ENCODE measurements at regions of chr7 and their contacts with region 1.

Region 1: GRCh38 chr7:85851571-85852193 is 664.8 kb upstream of the SEMA3D start:
- DNase-seq: peak; percentile 16
- ATAC-seq: no peak
- H3K4me3 ChIP-seq: no peak overlapping the region
- H3K27ac ChIP-seq: no peak overlapping the region
- H3K4me1 ChIP-seq: no peaks in the 10 kb centered on the region
- H3K27me3 ChIP-seq: no peaks in the 10 kb centered on the region
- CTCF ChIP-seq: peak; percentile 41
- EP300 ChIP-seq: no peak
- POLR2A ChIP-seq: no peak
- RAD21 ChIP-seq: no peak

Region 2: GRCh38 chr7:85634946-85635345 is 216.7 kb before region 1 on chr7:
- CTCF ChIA-PET with region 1: no interaction called
- POLR2A ChIA-PET with region 1: no interaction called
- in situ Hi-C with region 1: no loop called
- intact Hi-C with region 1: no loop called
- DNase-seq: no peak
- ATAC-seq: no peak
- H3K4me3 ChIP-seq: no peak overlapping the region
- H3K27ac ChIP-seq: no peak overlapping the region
- H3K4me1 ChIP-seq: no peaks in the 10 kb centered on the region; the same call in 1 of the 2 replicates
- H3K27me3 ChIP-seq: no peaks in the 10 kb centered on the region
- CTCF ChIP-seq: no peak
- EP300 ChIP-seq: no peak
- POLR2A ChIP-seq: no peak
- RAD21 ChIP-seq: no peak

Region 3: GRCh38 chr7:85669225-85669624 is 182.5 kb before region 1 on chr7:
- CTCF ChIA-PET with region 1: no interaction called
- POLR2A ChIA-PET with region 1: no interaction called
- in situ Hi-C with region 1: no loop called
- intact Hi-C with region 1: no loop called
- DNase-seq: no peak
- ATAC-seq: no peak
- H3K4me3 ChIP-seq: no peak overlapping the region
- H3K27ac ChIP-seq: no peak overlapping the region
- H3K4me1 ChIP-seq: no peaks in the 10 kb centered on the region
- H3K27me3 ChIP-seq: no peaks in the 10 kb centered on the region
- CTCF ChIP-seq: no peak
- EP300 ChIP-seq: no peak
- POLR2A ChIP-seq: no peak
- RAD21 ChIP-seq: no peak

Region 4: DNA sequence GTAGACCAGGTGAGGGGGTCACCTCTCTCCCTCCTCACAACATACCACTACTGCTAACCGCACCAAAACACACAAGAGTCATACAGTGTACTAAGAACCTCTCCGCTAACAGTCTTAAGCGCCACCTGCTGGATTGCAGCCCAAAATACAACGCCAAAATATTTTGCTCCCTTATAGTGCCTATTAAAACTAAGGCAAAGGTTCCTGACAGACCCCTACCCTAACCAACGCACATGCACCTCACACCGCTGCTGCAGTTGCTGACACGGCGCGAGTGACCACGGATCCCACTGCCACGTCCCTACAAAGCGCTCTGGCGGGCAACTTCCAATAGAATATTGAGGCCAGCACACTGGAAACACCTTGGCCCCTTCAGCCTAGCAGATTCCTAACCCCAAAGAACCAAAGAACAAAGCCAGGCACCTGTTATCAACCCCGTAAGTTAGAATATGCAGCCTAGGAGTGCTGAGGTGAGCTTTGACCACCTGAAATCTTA is 101.2 kb before region 1 on chr7:
- CTCF ChIA-PET with region 1: no interaction called
- POLR2A ChIA-PET with region 1: no interaction called
- in situ Hi-C with region 1: no loop called
- intact Hi-C with region 1: loop called (anchors 1 kb)
- DNase-seq: peak; percentile 36
- ATAC-seq: peak; percentile 97
- H3K4me3 ChIP-seq: no peak overlapping the region
- H3K27ac ChIP-seq: no peak overlapping the region
- H3K4me1 ChIP-seq: no peaks in the 10 kb centered on the region
- H3K27me3 ChIP-seq: no peaks in the 10 kb centered on the region
- CTCF ChIP-seq: peak; percentile 77
- EP300 ChIP-seq: no peak
- POLR2A ChIP-seq: no peak
- RAD21 ChIP-seq: peak; percentile 35; the same call in 1 of the 2 replicates

Region 5: DNA sequence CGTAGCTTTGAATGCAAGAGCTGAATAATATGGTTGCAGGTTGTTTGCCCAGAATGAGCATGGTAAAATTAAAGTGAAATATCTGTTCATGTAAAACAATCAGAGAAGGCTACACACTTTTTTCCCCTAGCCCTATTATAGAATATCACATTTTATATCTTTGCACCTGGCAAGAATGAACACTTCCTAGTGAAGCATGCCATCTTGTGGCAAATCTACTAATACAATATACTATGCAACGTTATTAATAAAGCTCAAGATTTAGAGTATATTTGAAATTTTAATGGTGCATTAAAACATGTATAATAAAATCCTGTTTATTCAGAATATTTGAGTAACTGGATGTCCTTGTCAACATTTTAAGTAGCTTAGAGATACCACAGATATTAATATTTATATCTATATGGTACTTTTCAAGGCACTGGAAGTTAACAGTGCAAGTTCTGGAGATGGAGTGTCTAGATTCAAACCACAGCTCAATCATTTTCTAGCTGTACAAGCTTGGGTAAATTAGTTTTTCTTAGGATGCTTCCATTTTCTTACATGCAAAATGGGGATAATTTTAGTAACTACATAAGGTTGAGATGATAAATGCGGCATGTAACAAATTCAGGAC is 21.8 kb before region 1 on chr7:
- CTCF ChIA-PET with region 1: no interaction called
- POLR2A ChIA-PET with region 1: no interaction called
- in situ Hi-C with region 1: no loop called
- intact Hi-C with region 1: no loop called
- DNase-seq: no peak
- ATAC-seq: no peak
- H3K4me3 ChIP-seq: no peak overlapping the region
- H3K27ac ChIP-seq: no peak overlapping the region
- H3K4me1 ChIP-seq: no peaks in the 10 kb centered on the region
- H3K27me3 ChIP-seq: no peaks in the 10 kb centered on the region
- CTCF ChIP-seq: peak; percentile 16; the same call in 1 of the 2 replicates
- EP300 ChIP-seq: no peak
- POLR2A ChIP-seq: no peak
- RAD21 ChIP-seq: no peak

Measured in HepG2 (cell line).